ENCODE measurements at regions of chr11 and their contacts with region 1.

Region 1: DNA sequence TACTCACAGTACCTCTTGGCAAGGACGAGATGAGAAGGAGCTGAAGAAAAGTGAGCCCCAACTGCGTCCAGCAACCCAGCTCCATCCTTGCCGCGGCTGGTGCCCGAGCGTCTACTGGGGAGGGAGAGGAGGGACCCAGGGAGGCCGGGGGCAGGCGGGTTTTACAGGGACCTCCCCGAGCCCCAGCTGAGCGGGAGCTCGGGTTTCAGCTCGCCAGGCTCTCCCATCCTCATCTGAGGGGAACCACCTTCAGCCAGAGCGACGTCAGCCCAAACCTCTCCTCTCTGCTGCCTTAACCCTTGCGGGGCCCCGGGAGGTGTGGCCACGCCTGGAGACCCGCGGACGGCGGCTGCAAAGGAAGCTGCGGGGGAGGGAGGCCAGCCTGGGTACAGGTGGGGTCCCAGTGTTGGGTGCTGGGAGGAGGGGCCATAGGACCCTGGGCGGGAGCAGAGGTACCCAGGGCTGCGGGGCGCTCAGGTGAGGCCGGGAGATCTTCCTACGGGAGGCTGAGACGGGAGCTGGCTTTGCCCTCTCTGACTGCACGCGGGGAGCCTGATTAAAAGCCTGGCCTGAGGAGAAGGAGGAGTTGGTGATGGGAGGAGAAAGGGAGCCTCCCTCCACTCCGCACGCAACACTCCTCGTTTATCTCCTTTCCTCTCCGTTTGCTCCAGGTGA is at the start of gene PAMR1:
- DNase-seq: no peak
- H3K4me3 ChIP-seq: peak within 1 kb of the TSS; percentile 80
- CTCF ChIP-seq: no peak

Region 2: GRCh38 chr11:35305670-35306382 is 219.8 kb before region 1 on chr11:
- CTCF ChIA-PET with region 1: no interaction called
- POLR2A ChIA-PET with region 1: no interaction called
- DNase-seq: no peak
- H3K4me3 ChIP-seq: no peak overlapping the region
- CTCF ChIP-seq: peak; percentile 60

Region 3: GRCh38 chr11:35511666-35512065 is 14.0 kb before region 1 on chr11:
- CTCF ChIA-PET with region 1: interaction called, 5 read pairs
- POLR2A ChIA-PET with region 1: interaction called, 10 read pairs
- DNase-seq: no peak
- H3K4me3 ChIP-seq: no peak overlapping the region
- CTCF ChIP-seq: no peak

Region 4: DNA sequence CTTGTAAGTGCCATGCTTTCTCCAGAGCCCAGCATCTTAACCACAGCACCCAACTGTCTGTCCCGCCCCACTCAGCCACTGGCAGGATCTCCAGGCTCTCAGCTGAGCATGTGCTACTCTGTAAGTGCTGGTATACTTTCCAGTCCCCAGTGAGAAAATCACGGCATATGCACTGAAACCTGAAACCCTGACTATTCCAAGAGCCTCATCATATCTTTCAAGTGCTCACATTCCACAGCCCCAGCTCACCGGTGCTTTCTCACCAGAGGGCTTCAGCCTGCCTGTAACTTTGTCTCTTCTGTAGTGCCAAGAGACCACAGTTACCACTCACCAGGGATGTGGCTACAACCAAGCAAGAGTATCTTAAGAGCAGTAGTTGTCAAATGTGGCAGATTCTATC is 24.1 kb after region 1 on chr11:
- CTCF ChIA-PET with region 1: interaction called, 6 read pairs
- POLR2A ChIA-PET with region 1: interaction called, 10 read pairs
- DNase-seq: peak; percentile 97
- H3K4me3 ChIP-seq: no peak overlapping the region
- CTCF ChIP-seq: no peak